Activated CD8-positive, alpha-beta T cell treated with anti-CD3 and anti-CD28 coated beads for 36 hours (primary cell): ENCODE measurements at regions of chr7 and their contacts with region 1.

Region 1: GRCh38 chr7:142811154-142811737 is 40.5 kb downstream of the PRSS2 start:
- DNase-seq: peak; percentile 59
- ATAC-seq: no peak
- H3K4me3 Mint-ChIP-seq: peak overlapping the region; percentile 100
- H3K27ac Mint-ChIP-seq: peak overlapping the region; percentile 97
- H3K4me1 Mint-ChIP-seq: peaks cover 68% of the 10 kb centered on the region
- H3K27me3 Mint-ChIP-seq: no peaks in the 10 kb centered on the region
- CTCF ChIP-seq: peak; percentile 83

Region 2: DNA sequence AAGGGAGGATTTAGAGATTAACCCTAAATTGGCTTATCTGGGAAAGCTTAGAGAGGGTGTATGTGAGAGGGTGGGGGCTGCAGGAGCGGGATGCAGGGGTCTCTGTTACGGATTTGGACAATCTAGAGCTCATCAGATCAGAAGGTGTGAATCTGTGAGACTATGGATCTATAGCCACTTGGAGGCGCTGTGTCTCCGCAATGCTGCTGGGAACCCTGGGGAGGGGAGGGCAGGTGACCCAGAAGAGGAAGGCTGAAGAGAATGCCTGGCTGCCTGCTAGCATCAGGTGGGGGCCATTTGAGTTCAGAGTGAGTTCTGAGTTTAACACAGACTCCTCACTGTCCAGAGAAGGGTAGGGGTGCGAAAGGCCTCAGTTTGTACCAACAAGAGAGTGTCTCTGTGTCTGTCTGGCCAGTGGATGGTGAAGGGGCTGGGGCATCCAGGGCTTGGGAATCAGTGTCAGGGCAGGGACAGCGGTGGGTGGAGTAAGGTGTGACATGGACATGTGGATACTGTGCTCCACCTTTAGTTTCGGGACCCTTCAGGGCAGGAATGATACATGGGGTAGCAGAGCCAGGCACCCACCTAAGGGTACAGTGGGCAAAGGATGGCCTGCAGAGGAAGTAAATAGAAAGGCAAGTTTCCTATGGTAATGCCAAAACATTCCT is 366.1 kb before region 1 on chr7:
- CTCF ChIA-PET with region 1: no interaction called
- POLR2A ChIA-PET with region 1: interaction called, 3 read pairs
- intact Hi-C with region 1: loop called (anchors 10 kb)
- DNase-seq: peak; percentile 59
- ATAC-seq: peak; percentile 75
- H3K4me3 Mint-ChIP-seq: no peak overlapping the region
- H3K27ac Mint-ChIP-seq: no peak overlapping the region
- H3K4me1 Mint-ChIP-seq: peaks cover 31% of the 10 kb centered on the region
- H3K27me3 Mint-ChIP-seq: no peaks in the 10 kb centered on the region
- CTCF ChIP-seq: peak; percentile 22

Region 3: GRCh38 chr7:142603870-142604448 is 207.3 kb before region 1 on chr7:
- CTCF ChIA-PET with region 1: interaction called, 10 read pairs
- POLR2A ChIA-PET with region 1: interaction called, 6 read pairs
- intact Hi-C with region 1: no loop called
- DNase-seq: peak; percentile 70
- ATAC-seq: peak; percentile 65
- H3K4me3 Mint-ChIP-seq: peak overlapping the region; percentile 20
- H3K27ac Mint-ChIP-seq: no peak overlapping the region
- H3K4me1 Mint-ChIP-seq: peaks cover 9% of the 10 kb centered on the region
- H3K27me3 Mint-ChIP-seq: no peaks in the 10 kb centered on the region
- CTCF ChIP-seq: peak; percentile 69

Region 4: GRCh38 chr7:142711746-142712619 is 99.3 kb before region 1 on chr7:
- CTCF ChIA-PET with region 1: interaction called, 13 read pairs
- POLR2A ChIA-PET with region 1: interaction called, 8 read pairs
- intact Hi-C with region 1: loop called (anchors 2 kb)
- DNase-seq: peak; percentile 62
- ATAC-seq: peak; percentile 90
- H3K4me3 Mint-ChIP-seq: peak overlapping the region; percentile 82
- H3K27ac Mint-ChIP-seq: peak overlapping the region; percentile 90
- H3K4me1 Mint-ChIP-seq: peaks cover 50% of the 10 kb centered on the region
- H3K27me3 Mint-ChIP-seq: no peaks in the 10 kb centered on the region
- CTCF ChIP-seq: peak; percentile 66

Region 5: DNA sequence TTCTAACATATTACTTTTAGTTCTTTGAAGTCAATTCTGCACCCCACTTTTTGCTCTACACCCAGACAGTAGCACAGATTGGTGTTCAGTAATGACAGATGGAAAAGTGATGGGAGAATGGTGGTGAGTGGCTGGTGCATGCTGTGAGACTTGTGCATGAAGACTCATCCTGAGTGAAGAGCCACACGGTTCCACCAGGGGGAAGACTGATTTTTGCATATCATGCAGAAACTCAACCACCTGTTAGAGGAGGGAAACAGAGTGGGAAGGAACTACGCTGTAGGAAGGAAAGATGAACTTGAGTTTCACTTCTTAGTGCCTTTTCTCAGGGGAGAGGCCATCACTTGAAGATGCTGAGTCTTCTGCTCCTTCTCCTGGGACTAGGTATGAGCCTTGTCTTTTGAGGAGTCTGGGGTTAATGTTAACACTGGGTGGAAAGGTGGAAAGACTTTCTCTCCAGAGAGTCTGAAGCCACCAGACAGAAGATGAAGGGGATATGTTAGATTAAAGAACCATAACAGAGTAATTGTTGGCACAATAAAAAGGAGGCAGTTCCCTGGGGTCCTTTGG is 71.2 kb before region 1 on chr7:
- CTCF ChIA-PET with region 1: no interaction called
- POLR2A ChIA-PET with region 1: no interaction called
- intact Hi-C with region 1: no loop called
- DNase-seq: no peak
- ATAC-seq: peak; percentile 47
- H3K4me3 Mint-ChIP-seq: peak overlapping the region; percentile 43
- H3K27ac Mint-ChIP-seq: peak overlapping the region; percentile 16
- H3K4me1 Mint-ChIP-seq: peaks cover 10% of the 10 kb centered on the region
- H3K27me3 Mint-ChIP-seq: no peaks in the 10 kb centered on the region
- CTCF ChIP-seq: no peak

Region 6: GRCh38 chr7:142827951-142828500 is 16.8 kb after region 1 on chr7:
- CTCF ChIA-PET with region 1: interaction called, 10 read pairs
- POLR2A ChIA-PET with region 1: no interaction called
- intact Hi-C with region 1: no loop called
- DNase-seq: no peak
- ATAC-seq: no peak
- H3K4me3 Mint-ChIP-seq: no peak overlapping the region
- H3K27ac Mint-ChIP-seq: no peak overlapping the region
- H3K4me1 Mint-ChIP-seq: peaks cover 2% of the 10 kb centered on the region
- H3K27me3 Mint-ChIP-seq: peaks cover 2% of the 10 kb centered on the region
- CTCF ChIP-seq: no peak